ENCODE measurements at regions of chr5 and their contacts with region 1.

Region 1: DNA sequence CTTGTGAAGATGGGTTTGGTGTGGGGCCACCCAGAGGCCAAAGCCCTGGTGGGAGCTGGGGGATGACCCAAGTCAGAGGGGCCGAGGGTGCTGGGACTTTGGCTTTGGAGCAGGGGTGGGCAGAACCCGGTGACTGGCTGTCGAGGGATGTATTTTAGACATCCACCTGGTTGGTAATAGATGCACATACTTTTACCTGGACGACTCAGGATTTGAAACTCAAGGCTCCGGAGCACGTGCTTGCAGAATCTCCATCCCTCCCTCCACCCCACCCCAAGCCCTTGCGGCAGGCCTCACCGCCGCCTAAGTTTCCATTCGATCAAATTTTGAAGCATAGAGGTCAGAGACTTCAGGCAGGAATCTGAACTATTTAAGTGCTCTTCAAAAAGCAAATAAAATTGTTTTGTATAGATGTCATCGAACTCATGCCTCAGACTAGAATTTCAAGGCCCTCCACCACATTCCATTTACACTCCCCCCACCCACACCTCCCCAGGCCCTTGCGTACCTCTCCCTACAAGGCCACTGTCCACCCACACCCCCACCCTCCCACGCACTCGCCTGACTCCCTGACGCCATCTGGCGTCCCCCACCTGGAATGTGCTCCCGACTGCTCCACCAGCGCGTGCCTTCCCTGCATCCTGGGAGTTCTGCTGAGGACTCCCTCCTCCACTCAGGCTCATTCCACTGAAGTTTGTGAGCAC is 56.6 kb upstream of the RPL26L1 start:
- DNase-seq: peak; percentile 88
- ATAC-seq: peak; percentile 79

Region 2: DNA sequence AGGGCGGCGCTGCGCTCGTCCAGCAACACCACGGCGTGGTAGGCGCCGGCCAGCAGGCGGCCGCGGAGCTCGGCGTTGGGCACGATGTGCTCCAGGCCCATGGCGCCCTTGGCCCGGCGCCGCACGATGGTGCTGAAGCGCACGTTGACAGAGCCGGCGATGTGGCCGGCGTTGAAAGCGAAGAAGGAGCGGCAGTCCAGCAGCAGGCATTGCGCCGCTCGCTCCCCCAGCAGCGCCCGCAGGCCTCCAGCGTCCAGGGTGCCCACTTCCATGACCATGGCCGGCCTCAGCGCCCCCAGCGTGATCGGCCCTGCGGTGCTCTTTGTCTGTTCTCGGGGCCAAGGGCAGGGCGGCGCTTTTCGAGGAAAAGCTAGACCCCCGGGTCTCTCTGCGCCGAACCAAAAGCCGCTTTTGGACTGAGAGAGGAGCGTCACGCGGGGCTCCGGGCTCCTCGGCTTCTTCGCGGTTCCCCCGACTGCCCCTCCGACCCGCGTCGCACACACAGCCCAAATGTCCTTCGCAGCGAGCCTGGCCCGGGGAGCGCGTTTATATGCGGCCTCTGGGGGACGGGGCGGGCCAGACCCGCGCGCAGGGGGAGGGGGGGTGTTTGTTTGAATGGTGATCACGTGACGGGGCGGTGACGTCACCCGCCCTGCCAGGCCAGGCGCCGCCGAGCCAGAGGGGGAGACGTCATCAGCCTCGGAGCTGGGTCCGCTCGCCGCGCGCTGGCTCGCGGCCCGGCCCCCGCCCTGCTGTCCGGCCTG is 131.8 kb before region 1 on chr5 and contains the start of gene DUSP1:
- intact Hi-C with region 1: loop called (anchors 10 kb)
- DNase-seq: peak; percentile 100
- ATAC-seq: peak; percentile 73
- total RNA-seq, gene DUSP1: 122 TPM

Region 3: GRCh38 chr5:172858990-172859811 is 43.4 kb before region 1 on chr5:
- intact Hi-C with region 1: loop called (anchors 5 kb)
- DNase-seq: peak; percentile 90
- ATAC-seq: peak; percentile 38

Region 4: DNA sequence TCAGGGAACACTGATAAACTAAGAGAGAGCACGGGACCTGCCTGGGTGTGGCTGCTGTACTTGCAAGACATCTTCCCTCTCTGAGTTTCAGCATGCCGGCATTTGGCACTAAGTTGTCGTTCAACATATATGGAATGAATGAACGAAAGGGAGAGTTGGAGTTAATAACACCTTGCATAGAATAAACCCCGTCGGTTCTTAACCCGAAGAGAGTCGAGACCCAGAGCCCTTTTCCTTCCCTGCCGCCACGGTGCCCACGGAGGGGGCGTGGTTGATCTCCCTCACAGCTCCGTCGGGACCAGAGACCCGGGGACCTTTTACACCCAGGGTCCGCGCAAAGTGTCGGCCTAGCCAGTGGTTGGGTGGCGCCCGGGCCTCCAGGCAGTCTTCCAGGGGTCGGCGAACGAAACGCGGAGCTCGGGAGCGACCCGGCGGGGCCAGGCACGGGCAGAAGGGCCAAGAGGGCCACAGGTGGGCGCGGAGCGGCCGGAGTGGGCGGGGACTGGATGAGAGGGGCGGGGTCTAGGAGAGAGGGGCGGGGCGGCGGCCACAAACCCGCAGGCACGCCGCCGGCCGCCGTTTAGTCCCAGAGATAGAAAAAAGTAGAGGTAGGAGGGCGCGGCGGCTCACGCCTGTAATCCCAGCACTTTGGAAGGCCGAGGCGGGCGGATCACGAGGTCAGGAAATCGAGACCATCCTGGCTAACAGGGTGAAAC is 55.8 kb after region 1 on chr5:
- intact Hi-C with region 1: no loop called
- DNase-seq: peak; percentile 83
- ATAC-seq: peak; percentile 94